ENCODE measurements at regions of chr3 and their contacts with region 1.

Region 1: GRCh38 chr3:183635431-183636220 is at the start of gene KLHL24:
- DNase-seq: peak; percentile 75 to 90 (median 88)
- ATAC-seq: peak; percentile 83
- H3K4me3 ChIP-seq: peak within 1 kb of the TSS; percentile 75
- H3K4me3 Mint-ChIP-seq: peak within 1 kb of the TSS; percentile 92 to 96 (median 94)
- H3K27ac ChIP-seq: peak within 1 kb of the TSS; percentile 91
- H3K27ac Mint-ChIP-seq: peak within 1 kb of the TSS; percentile 87 to 98 (median 95)
- H3K4me1 ChIP-seq: peaks cover 15 to 23% of the 10 kb centered on the region in 2 donors
- H3K4me1 Mint-ChIP-seq: peaks cover 18 to 44% (median 30%) of the 10 kb centered on the region in 7 donors
- H3K27me3 ChIP-seq: no peaks in the 10 kb centered on the region
- H3K27me3 Mint-ChIP-seq: no peaks in the 10 kb centered on the region
- total RNA-seq, gene KLHL24: 25.3 to 161 (median 129) TPM

Region 2: GRCh38 chr3:182644800-182645433 is 990.7 kb before region 1 on chr3:
- CTCF ChIA-PET with region 1: no interaction called
- POLR2A ChIA-PET with region 1: no interaction called
- intact Hi-C with region 1: no loop called
- DNase-seq: peak in 1 of 9 donors; percentile 26
- ATAC-seq: no peak
- H3K4me3 ChIP-seq: no peak overlapping the region
- H3K4me3 Mint-ChIP-seq: no peak overlapping the region
- H3K27ac ChIP-seq: no peak overlapping the region
- H3K27ac Mint-ChIP-seq: no peak overlapping the region
- H3K4me1 ChIP-seq: no peaks in the 10 kb centered on the region
- H3K4me1 Mint-ChIP-seq: no peaks in the 10 kb centered on the region
- H3K27me3 ChIP-seq: no peaks in the 10 kb centered on the region
- H3K27me3 Mint-ChIP-seq: peaks cover 9 to 33% (median 21%) of the 10 kb centered on the region in 5 donors

Region 3: DNA sequence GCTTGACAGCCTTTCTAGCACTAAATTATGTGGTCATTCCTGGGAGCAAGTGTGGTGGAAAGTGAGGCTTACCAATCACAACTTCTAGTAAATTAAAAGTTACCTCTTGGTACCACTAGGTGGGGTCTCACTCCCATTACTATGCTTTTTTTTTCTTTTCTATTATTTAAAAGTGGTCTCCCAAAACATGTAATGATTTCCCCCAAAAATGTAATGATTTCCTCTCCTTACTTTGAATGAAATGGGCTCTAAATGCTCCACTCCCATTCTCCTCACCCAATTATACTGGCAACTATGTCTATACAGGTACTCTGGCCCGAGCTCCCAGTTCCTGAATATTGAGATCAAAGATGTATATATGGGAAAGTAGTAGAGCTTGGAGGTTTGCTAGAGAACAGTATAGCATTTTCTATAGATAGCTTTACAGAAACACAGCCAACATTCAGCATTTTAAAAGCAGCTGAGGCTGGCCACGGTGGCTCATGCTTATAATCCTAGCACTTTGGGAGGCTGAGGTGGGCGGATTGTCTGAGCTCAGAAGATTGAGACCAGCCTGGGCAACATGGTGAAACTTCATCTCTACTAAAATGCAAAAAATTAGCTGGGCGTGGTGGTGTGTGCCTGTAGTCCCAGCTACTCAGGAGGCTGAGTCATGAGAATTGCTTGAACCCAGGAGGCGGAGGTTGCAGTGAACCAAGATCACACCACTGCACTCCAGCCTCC is 726.1 kb before region 1 on chr3:
- CTCF ChIA-PET with region 1: no interaction called
- POLR2A ChIA-PET with region 1: no interaction called
- intact Hi-C with region 1: no loop called
- DNase-seq: peak in 1 of 9 donors; percentile 16
- ATAC-seq: peak; percentile 46
- H3K4me3 ChIP-seq: no peak overlapping the region
- H3K4me3 Mint-ChIP-seq: no peak overlapping the region
- H3K27ac ChIP-seq: peak overlapping the region; percentile 16
- H3K27ac Mint-ChIP-seq: peak overlapping the region in 8 of 9 donors; percentile 20 to 88 (median 72)
- H3K4me1 ChIP-seq: peaks cover 15 to 17% of the 10 kb centered on the region in 2 donors
- H3K4me1 Mint-ChIP-seq: peaks cover 22 to 50% (median 42%) of the 10 kb centered on the region in 7 donors
- H3K27me3 ChIP-seq: no peaks in the 10 kb centered on the region
- H3K27me3 Mint-ChIP-seq: no peaks in the 10 kb centered on the region

Region 4: GRCh38 chr3:183099026-183099837 is 536.4 kb before region 1 on chr3 and contains the start of gene MCCC1:
- CTCF ChIA-PET with region 1: no interaction called
- POLR2A ChIA-PET with region 1: no interaction called
- intact Hi-C with region 1: loop called (anchors 1 to 10 kb)
- DNase-seq: peak; percentile 82 to 98 (median 97)
- ATAC-seq: peak; percentile 99
- H3K4me3 ChIP-seq: peak within 1 kb of the TSS; percentile 73
- H3K4me3 Mint-ChIP-seq: peak within 1 kb of the TSS; percentile 87 to 98 (median 97)
- H3K27ac ChIP-seq: peak within 1 kb of the TSS; percentile 83
- H3K27ac Mint-ChIP-seq: peak within 1 kb of the TSS; percentile 90 to 99 (median 97)
- H3K4me1 ChIP-seq: peaks cover 7 to 10% of the 10 kb centered on the region in 2 donors
- H3K4me1 Mint-ChIP-seq: peaks cover 18 to 52% (median 43%) of the 10 kb centered on the region in 7 donors
- H3K27me3 ChIP-seq: no peaks in the 10 kb centered on the region
- H3K27me3 Mint-ChIP-seq: no peaks in the 10 kb centered on the region
- total RNA-seq, gene MCCC1: 17.7 to 37.5 (median 31.8) TPM

Region 5: DNA sequence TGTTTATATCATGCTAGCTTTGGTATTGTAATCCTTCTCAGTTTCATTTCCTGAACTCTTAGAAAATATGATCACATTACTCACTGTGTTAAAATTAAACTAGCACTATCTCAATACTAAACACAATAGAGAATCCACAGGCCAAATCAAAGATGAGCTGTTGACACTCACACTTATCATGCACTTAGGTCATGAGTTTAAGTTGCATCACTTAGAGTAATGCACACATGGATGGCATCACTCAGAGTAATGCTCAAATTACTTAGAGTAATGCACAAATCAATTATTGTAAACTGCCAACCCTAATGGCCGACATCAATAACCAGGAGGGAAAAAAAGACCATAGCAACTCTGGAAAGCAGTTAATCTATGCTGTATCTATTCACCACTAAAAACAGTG is 167.2 kb before region 1 on chr3:
- CTCF ChIA-PET with region 1: interaction called, 4 read pairs
- POLR2A ChIA-PET with region 1: no interaction called
- intact Hi-C with region 1: loop called (anchors 1 kb)
- DNase-seq: no peak
- ATAC-seq: no peak
- H3K4me3 ChIP-seq: no peak overlapping the region
- H3K4me3 Mint-ChIP-seq: no peak overlapping the region
- H3K27ac ChIP-seq: no peak overlapping the region
- H3K27ac Mint-ChIP-seq: peak overlapping the region in 1 of 9 donors; percentile 27
- H3K4me1 ChIP-seq: peaks cover 0 to 5% of the 10 kb centered on the region in 2 donors
- H3K4me1 Mint-ChIP-seq: peaks cover 2 to 18% (median 5%) of the 10 kb centered on the region in 7 donors
- H3K27me3 ChIP-seq: no peaks in the 10 kb centered on the region
- H3K27me3 Mint-ChIP-seq: peaks cover 0 to 4% (median 0%) of the 10 kb centered on the region in 5 donors

Region 6: GRCh38 chr3:183653209-183654064 is 17.8 kb after region 1 on chr3:
- CTCF ChIA-PET with region 1: interaction called, 3 read pairs
- POLR2A ChIA-PET with region 1: interaction called, 7 read pairs
- intact Hi-C with region 1: loop called in 1 of 2 experiments (anchors 2 kb)
- DNase-seq: peak in 3 of 9 donors; percentile 7 to 23 (median 10)
- ATAC-seq: no peak
- H3K4me3 ChIP-seq: no peak overlapping the region
- H3K4me3 Mint-ChIP-seq: peak overlapping the region in 5 of 10 donors; percentile 11 to 54 (median 30)
- H3K27ac ChIP-seq: no peak overlapping the region
- H3K27ac Mint-ChIP-seq: peak overlapping the region in 5 of 9 donors; percentile 22 to 88 (median 46)
- H3K4me1 ChIP-seq: peaks cover 0 to 3% of the 10 kb centered on the region in 2 donors
- H3K4me1 Mint-ChIP-seq: peaks cover 0 to 29% (median 21%) of the 10 kb centered on the region in 7 donors
- H3K27me3 ChIP-seq: no peaks in the 10 kb centered on the region
- H3K27me3 Mint-ChIP-seq: no peaks in the 10 kb centered on the region

Region 7: GRCh38 chr3:183725387-183725786 is 89.8 kb after region 1 on chr3:
- CTCF ChIA-PET with region 1: no interaction called
- POLR2A ChIA-PET with region 1: no interaction called
- intact Hi-C with region 1: no loop called
- DNase-seq: no peak
- ATAC-seq: no peak
- H3K4me3 ChIP-seq: no peak overlapping the region
- H3K4me3 Mint-ChIP-seq: no peak overlapping the region
- H3K27ac ChIP-seq: no peak overlapping the region
- H3K27ac Mint-ChIP-seq: peak overlapping the region in 1 of 9 donors; percentile 41
- H3K4me1 ChIP-seq: no peaks in the 10 kb centered on the region
- H3K4me1 Mint-ChIP-seq: peaks cover 0 to 5% (median 0%) of the 10 kb centered on the region in 7 donors
- H3K27me3 ChIP-seq: no peaks in the 10 kb centered on the region
- H3K27me3 Mint-ChIP-seq: no peaks in the 10 kb centered on the region

Region 8: GRCh38 chr3:184017672-184018423 is 382.2 kb after region 1 on chr3 and contains the start of gene ABCC5:
- CTCF ChIA-PET with region 1: no interaction called
- POLR2A ChIA-PET with region 1: no interaction called
- intact Hi-C with region 1: loop called (anchors 2 to 5 kb)
- DNase-seq: peak; percentile 62 to 84 (median 79)
- ATAC-seq: peak; percentile 96
- H3K4me3 ChIP-seq: peak within 1 kb of the TSS; percentile 100
- H3K4me3 Mint-ChIP-seq: peak within 1 kb of the TSS; percentile 96 to 100 (median 99)
- H3K27ac ChIP-seq: peak within 1 kb of the TSS; percentile 72
- H3K27ac Mint-ChIP-seq: peak within 1 kb of the TSS; percentile 70 to 95 (median 91)
- H3K4me1 ChIP-seq: peaks cover 8 to 14% of the 10 kb centered on the region in 2 donors
- H3K4me1 Mint-ChIP-seq: peaks cover 11 to 33% (median 25%) of the 10 kb centered on the region in 7 donors
- H3K27me3 ChIP-seq: no peaks in the 10 kb centered on the region
- H3K27me3 Mint-ChIP-seq: peaks cover 5 to 15% (median 9%) of the 10 kb centered on the region in 5 donors
- total RNA-seq, gene ABCC5: 15.6 to 50.4 (median 25.5) TPM

Region 9: DNA sequence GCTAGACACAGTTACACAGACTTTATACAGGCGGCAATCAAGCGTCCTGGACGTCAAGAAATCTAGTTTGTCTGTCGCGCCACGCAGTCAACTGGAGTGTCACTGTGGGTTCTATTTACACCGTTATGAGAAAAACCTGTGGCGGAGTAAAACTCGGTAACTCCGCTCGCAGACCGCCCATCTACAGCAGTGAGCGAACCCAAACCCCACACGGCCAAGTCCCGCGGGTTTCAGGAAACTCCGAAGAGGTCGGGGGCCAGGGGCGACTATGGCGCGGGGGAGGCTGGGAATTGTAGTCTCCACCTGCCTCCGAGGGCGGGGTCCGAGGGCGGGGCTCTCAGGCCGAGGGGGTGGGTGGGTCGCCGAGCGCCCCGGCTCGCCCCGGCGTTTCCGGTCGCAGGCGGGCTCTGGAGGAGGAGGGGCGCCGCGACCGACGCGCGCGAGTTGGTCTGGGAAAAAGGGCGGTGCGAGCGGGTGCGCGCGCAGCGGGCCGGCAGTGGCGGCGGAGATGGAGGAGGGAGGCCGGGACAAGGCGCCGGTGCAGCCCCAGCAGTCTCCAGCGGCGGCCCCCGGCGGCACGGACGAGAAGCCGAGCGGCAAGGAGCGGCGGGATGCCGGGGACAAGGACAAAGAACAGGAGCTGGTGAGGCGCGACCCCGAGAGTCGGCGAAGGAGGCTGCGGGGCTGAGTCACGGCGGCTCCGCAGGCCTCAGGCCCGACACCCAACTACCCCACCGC is 663.3 kb after region 1 on chr3 and contains the start of gene PSMD2:
- CTCF ChIA-PET with region 1: no interaction called
- POLR2A ChIA-PET with region 1: no interaction called
- intact Hi-C with region 1: loop called (anchors 1 kb)
- DNase-seq: peak; percentile 93 to 97 (median 96)
- ATAC-seq: peak; percentile 98
- H3K4me3 ChIP-seq: peak within 1 kb of the TSS; percentile 74
- H3K4me3 Mint-ChIP-seq: peak within 1 kb of the TSS; percentile 89 to 97 (median 94)
- H3K27ac ChIP-seq: peak within 1 kb of the TSS; percentile 80
- H3K27ac Mint-ChIP-seq: peak within 1 kb of the TSS; percentile 85 to 97 (median 92)
- H3K4me1 ChIP-seq: peaks cover 12 to 15% of the 10 kb centered on the region in 2 donors
- H3K4me1 Mint-ChIP-seq: peaks cover 15 to 37% (median 25%) of the 10 kb centered on the region in 7 donors
- H3K27me3 ChIP-seq: no peaks in the 10 kb centered on the region
- H3K27me3 Mint-ChIP-seq: peaks cover 0 to 8% (median 0%) of the 10 kb centered on the region in 5 donors
- total RNA-seq, gene PSMD2: 139 to 204 (median 149) TPM

Measured in naive thymus-derived CD4-positive, alpha-beta T cell (primary cell).